ENCODE measurements at regions of chr20 and their contacts with region 1.

Region 1: GRCh38 chr20:58188527-58188926 is 39.9 kb downstream of the ANKRD60 start:
- DNase-seq: no peak
- H3K4me3 ChIP-seq: no peak overlapping the region
- H3K27ac ChIP-seq: no peak overlapping the region
- H3K4me1 ChIP-seq: no peaks in the 10 kb centered on the region
- H3K27me3 ChIP-seq: no peaks in the 10 kb centered on the region
- CTCF ChIP-seq: no peak

Region 2: DNA sequence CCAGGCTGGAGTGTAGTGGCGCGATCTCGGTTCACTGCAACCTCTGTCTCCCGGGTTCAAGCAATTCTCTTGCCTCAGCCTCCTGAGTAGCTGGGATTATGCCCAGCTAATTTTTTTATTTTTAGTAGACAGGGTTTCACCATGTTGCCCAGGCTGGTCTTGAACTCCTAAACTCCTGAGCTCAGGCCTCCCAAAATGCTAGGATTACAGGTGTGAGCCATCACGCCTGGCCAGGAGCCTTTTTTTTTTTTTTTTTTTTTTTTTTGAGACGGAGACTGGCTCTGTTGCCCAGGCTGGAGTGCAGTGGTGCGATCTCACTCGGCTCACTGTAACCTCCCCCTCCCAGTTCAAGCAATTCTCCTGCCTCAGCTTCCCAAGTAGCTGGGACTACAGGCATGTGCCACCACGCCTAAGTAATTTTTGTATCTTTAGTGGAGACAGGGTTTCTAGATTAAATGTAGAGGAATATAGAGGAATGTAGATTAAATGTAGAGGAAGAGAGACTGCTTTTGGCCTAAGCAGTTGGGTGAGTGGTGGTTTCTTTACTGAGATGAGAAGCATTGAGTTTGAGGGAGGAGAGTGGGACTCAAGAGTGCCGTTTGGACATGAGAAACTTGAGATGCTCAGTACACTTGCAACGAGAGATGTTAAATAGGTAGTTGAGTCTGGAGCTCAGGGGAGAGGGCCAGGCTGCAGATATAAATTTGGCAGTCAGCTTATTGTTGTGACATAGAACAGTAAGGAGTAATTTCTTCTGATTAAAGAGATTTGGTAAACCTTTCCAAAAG is 217.2 kb after region 1 on chr20:
- CTCF ChIA-PET with region 1: interaction called, 16 read pairs
- POLR2A ChIA-PET with region 1: no interaction called
- intact Hi-C with region 1: no loop called
- DNase-seq: no peak
- H3K4me3 ChIP-seq: no peak overlapping the region
- H3K27ac ChIP-seq: 0 out of 2 replicates have a peak overlapping the region, but pooled peaks have one; percentile 27
- H3K4me1 ChIP-seq: peaks cover 23% of the 10 kb centered on the region
- H3K27me3 ChIP-seq: no peaks in the 10 kb centered on the region
- CTCF ChIP-seq: no peak

Region 3: DNA sequence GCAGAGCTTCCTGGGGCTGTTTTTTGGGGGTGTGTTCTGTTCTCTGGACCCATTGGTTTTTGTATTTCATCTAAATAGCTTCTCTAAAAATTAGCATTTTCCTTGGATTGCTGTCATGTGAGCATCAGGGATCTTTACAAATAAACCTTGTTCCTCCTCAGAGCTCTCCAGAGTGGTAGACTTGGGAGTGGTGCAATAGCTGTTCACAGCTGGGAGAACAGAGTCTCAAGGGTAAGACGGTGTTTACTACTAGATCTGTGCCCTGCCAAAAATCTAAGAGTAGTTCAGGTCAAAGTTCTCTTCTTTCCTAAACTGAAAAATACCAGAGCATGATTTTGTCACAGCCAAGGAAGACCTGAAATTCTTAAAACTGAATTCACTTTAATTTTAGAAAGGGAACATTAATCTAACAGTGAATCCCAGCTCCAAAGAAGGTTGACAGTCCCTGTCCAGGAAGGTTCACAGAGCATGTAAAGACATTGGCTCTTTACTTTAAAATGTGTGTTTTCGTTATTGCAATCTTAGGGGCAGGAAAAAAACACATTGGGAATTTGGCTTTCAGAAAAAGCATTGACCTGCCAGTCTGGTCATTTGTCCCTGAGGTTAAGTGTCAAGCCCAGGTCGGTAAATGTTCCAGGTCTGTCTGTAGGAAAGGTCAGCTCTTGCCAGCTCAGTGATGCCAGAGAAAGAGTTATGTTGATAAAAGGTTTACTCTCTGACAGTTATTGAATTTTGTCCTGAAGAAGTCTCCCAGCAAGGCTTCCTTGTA is 243.8 kb after region 1 on chr20:
- CTCF ChIA-PET with region 1: no interaction called
- POLR2A ChIA-PET with region 1: no interaction called
- intact Hi-C with region 1: no loop called
- DNase-seq: no peak
- H3K4me3 ChIP-seq: no peak overlapping the region
- H3K27ac ChIP-seq: no peak overlapping the region
- H3K4me1 ChIP-seq: no peaks in the 10 kb centered on the region
- H3K27me3 ChIP-seq: no peaks in the 10 kb centered on the region
- CTCF ChIP-seq: no peak

Measured in PC-9 (cell line).